Activated B cell treated with CpG ODN at 0.5 μM for 24 hours (primary cell): ENCODE measurements at regions of chr10 and their contacts with region 1.

Region 1: DNA sequence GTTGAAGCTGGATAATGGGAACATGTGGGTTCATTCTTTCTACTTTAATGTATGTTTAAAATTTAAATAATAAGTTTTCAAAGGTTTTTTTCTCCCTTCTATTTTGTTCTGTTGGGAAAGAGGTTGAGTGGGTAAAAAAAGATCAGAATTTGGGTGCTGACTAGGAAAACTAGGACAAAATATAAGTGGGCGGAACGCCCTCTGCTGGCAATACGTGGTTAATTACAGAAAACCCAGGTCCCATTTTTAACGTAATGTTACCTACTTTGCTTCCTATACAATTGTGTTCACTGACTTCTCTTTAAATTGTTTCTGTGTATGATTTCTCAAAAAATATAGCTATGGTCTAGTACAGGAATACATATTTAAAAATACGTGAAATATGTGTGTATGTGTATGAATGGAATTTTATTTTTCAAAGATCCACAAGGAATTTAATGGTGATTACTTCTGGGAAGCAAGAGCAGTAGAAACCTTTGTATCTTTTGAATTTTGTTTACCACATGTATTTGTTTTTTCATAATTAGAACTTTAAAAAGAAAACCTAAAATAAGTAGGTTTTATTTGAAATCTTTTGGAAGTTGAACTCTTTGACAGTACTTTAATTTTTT is 8.7 kb downstream of the ECD start:
- DNase-seq: peak; percentile 23
- ATAC-seq: peak; percentile 37
- H3K4me3 Mint-ChIP-seq: no peak overlapping the region
- H3K27ac Mint-ChIP-seq: no peak overlapping the region
- H3K4me1 Mint-ChIP-seq: peaks cover 18% of the 10 kb centered on the region
- H3K27me3 Mint-ChIP-seq: no peaks in the 10 kb centered on the region
- CTCF ChIP-seq: peak; percentile 70

Region 2: DNA sequence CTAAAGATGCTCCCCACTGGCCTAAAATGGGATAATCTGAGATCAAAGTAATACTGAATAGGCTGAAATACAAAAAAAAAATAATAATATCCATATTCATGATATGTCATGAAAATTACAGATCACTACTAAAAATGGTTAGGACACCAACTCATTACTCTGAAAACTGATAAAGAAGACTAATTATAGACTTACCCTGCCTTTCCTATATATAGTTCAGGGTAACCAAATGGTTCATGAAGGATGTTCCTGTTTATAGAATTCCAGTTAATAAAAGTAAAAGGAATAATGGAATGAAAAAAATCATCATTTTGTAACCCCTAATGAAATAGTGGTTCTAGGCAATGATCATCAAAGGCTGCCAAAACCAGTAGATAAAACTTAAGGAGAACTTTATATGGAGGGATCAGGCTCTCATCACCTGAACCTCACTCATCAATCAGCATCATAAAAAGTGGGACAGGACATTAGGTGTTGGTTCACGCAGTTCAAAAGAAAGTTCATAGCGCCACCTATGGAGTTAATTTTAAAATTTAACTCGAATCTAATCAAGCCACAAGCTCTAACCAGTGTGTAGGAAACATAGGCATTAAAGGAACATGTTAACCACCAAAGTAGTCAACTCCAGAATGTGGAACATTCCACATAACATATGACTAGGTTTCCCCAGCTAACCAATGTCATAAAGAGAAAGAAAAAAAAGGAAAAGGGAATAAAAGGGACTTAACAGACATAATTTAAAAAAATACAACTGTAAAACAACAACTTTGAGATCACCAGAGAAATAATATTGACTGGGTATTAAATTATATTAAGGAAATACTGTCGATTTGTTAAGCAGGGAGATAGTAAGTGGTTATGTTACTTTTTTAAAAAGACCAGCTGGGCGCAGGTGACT is 98.2 kb before region 1 on chr10:
- CTCF ChIA-PET with region 1: interaction called, 14 read pairs
- POLR2A ChIA-PET with region 1: no interaction called
- intact Hi-C with region 1: no loop called
- DNase-seq: no peak
- ATAC-seq: no peak
- H3K4me3 Mint-ChIP-seq: no peak overlapping the region
- H3K27ac Mint-ChIP-seq: no peak overlapping the region
- H3K4me1 Mint-ChIP-seq: peaks cover 1% of the 10 kb centered on the region
- H3K27me3 Mint-ChIP-seq: no peaks in the 10 kb centered on the region
- CTCF ChIP-seq: no peak